ENCODE measurements at regions of chr12 and their contacts with region 1.

Region 1: GRCh38 chr12:42482445-42483237 is 106.9 kb downstream of the PRICKLE1 start:
- DNase-seq: peak; percentile 86 to 95 (median 91)
- H3K4me3 ChIP-seq: peak overlapping the region; percentile 69 to 82 (median 75)
- H3K27ac ChIP-seq: peak overlapping the region; percentile 77 to 86
- H3K4me1 ChIP-seq: peaks cover 0 to 6% (median 3%) of the 10 kb centered on the region in 3 donors
- H3K27me3 ChIP-seq: no peaks in the 10 kb centered on the region
- CTCF ChIP-seq: peak; percentile 74

Region 2: GRCh38 chr12:42589465-42590329 is 107.1 kb after region 1 on chr12 and contains the start of gene PRICKLE1:
- intact Hi-C with region 1: loop called (anchors 10 kb)
- DNase-seq: peak; percentile 46 to 79 (median 75)
- H3K4me3 ChIP-seq: peak within 1 kb of the TSS; percentile 58 to 87 (median 83)
- H3K27ac ChIP-seq: no peak within 1 kb of the TSS
- H3K4me1 ChIP-seq: peaks cover 0 to 7% (median 0%) of the 10 kb centered on the region in 3 donors
- H3K27me3 ChIP-seq: no peaks in the 10 kb centered on the region
- CTCF ChIP-seq: no peak
- total RNA-seq, gene PRICKLE1: 21.7 TPM

Region 3: DNA sequence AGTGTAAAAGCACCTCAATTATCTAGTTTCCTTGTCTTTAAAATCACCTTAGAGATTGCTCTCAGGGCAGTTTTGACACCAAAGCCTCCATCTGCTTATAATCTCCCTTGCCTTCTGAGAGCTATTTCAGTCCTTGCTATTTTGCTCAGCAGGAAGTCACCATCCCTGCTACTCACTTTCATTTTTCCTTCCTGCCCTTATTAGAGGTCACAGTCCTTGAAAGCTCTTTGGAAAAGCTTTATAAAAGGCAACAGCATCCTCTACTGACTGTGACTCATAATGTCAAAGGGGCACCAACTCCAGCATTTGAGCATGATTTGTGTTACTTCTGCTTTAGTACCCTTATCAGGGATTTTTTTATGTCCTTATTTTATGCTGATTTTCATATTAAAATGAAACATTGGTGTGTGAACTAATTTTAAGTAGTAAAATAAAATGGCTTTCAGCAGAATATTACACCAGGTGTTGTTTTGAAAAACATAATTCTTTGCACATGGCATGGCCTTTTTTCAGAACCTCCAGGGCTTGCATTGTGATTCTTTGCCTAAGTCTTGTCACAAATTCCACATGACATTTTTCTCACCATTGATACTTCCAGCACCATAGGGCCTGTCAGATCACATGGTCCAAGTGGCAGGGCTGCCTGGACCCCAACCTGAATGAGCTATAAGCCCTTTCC is 856.3 kb after region 1 on chr12:
- intact Hi-C with region 1: loop called (anchors 10 kb)
- DNase-seq: peak in 2 of 5 donors; percentile 74 to 85
- H3K4me3 ChIP-seq: no peak overlapping the region
- H3K27ac ChIP-seq: peak overlapping the region in 1 of 2 donors; percentile 22
- H3K4me1 ChIP-seq: peaks cover 0 to 20% (median 4%) of the 10 kb centered on the region in 3 donors
- H3K27me3 ChIP-seq: no peaks in the 10 kb centered on the region
- CTCF ChIP-seq: peak; percentile 75